ENCODE measurements at regions of chr11 and their contacts with region 1.

Region 1: GRCh38 chr11:64263021-64263946 is 12.0 kb downstream of the PLCB3 start:
- DNase-seq: no peak
- ATAC-seq: no peak
- H3K4me3 ChIP-seq: no peak overlapping the region
- H3K4me3 Mint-ChIP-seq: no peak overlapping the region
- H3K27ac ChIP-seq: no peak overlapping the region
- H3K27ac Mint-ChIP-seq: no peak overlapping the region
- H3K4me1 ChIP-seq: peaks cover 0 to 15% of the 10 kb centered on the region in 2 experiments
- H3K4me1 Mint-ChIP-seq: peaks cover 5 to 14% (median 7%) of the 10 kb centered on the region in 3 donors
- H3K27me3 ChIP-seq: no peaks in the 10 kb centered on the region
- H3K27me3 Mint-ChIP-seq: no peaks in the 10 kb centered on the region

Region 2: DNA sequence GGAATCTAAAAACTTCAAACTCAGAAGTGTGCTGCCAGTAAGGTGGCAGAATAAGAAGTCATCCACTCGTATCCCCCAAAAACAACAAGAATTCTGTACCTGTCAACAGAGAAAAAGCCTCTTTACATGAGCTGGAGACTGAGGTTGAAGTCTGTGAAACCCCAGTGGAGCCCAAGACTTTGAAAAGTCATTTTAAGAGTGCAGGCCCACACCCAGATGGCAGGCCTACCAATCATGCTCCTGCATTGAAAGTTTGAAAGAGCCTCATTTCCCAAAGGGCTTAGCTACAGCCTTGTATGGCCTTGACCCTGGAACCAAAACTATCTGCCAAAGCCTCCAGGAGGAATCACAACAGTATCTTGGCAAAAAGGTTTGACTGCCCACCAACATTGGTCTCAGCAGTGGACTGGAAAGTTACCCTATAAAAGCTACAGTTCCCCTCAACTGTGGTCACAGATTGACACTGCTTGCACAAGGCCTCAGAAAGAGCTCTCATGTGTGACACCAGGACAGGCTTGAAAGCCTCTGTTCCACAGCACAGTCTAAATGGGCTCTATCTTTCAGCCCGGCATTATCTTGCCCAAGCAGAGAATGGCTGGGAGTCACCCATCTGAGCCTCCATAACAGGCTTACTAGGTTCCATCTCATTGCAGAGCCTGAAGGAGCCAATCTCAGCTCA is 846.0 kb before region 1 on chr11:
- CTCF ChIA-PET with region 1: no interaction called
- POLR2A ChIA-PET with region 1: no interaction called
- DNase-seq: no peak
- ATAC-seq: no peak
- H3K4me3 ChIP-seq: no peak overlapping the region
- H3K4me3 Mint-ChIP-seq: no peak overlapping the region
- H3K27ac ChIP-seq: no peak overlapping the region
- H3K27ac Mint-ChIP-seq: no peak overlapping the region
- H3K4me1 ChIP-seq: peaks cover 0 to 15% of the 10 kb centered on the region in 2 experiments
- H3K4me1 Mint-ChIP-seq: peaks cover 19 to 32% (median 20%) of the 10 kb centered on the region in 3 donors
- H3K27me3 ChIP-seq: peaks cover 2 to 3% of the 10 kb centered on the region in 2 experiments
- H3K27me3 Mint-ChIP-seq: peaks cover 0 to 5% of the 10 kb centered on the region in 2 donors

Region 3: GRCh38 chr11:64245401-64245796 is 17.9 kb before region 1 on chr11:
- CTCF ChIA-PET with region 1: no interaction called
- POLR2A ChIA-PET with region 1: interaction called in 1 of 2 experiments, 11 read pairs
- DNase-seq: peak in 18 of 35 experiments; percentile 18 to 63 (median 36)
- ATAC-seq: no peak
- H3K4me3 ChIP-seq: peak overlapping the region; percentile 64 to 76
- H3K4me3 Mint-ChIP-seq: peak overlapping the region; percentile 80 to 90 (median 89)
- H3K27ac ChIP-seq: peak overlapping the region; percentile 43
- H3K27ac Mint-ChIP-seq: peak overlapping the region; percentile 87 to 88
- H3K4me1 ChIP-seq: peaks cover 12 to 57% of the 10 kb centered on the region in 2 experiments
- H3K4me1 Mint-ChIP-seq: peaks cover 36 to 46% (median 41%) of the 10 kb centered on the region in 3 donors
- H3K27me3 ChIP-seq: peaks cover 0 to under 1% of the 10 kb centered on the region in 2 experiments
- H3K27me3 Mint-ChIP-seq: no peaks in the 10 kb centered on the region

Measured in T-cell (primary cell).